KBM-7 (cell line): ENCODE measurements at regions of chr7 and their contacts with region 1.

Region 1: GRCh38 chr7:38215735-38216670 is 38.0 kb downstream of the STARD3NL start:
- DNase-seq: peak; percentile 96

Region 2: GRCh38 chr7:36916619-36917018 is 1299.4 kb before region 1 on chr7:
- in situ Hi-C with region 1: no loop called
- DNase-seq: no peak

Region 3: DNA sequence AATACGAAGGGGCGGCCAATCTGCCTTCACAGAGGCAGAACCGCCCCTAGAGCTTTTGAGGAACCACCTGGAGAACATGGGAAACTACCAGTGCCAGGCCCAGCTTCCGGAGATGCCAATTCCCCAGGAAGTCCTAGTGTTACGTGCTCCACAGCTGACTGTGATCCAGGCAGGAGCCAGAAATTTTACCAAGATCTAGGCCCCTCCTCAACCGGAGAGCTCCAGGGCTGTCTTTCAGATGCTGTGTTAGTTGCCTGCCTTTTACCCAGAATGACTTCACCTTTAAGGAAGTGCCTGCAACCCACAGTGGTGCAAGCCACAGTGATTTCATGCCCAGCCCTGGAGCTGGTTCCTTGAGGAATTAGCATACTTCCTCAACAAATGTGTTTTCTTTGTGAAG is 830.2 kb before region 1 on chr7:
- in situ Hi-C with region 1: no loop called
- DNase-seq: peak; percentile 43

Region 4: GRCh38 chr7:37916673-37917660 is 299.0 kb before region 1 on chr7 and contains the start of gene SFRP4:
- in situ Hi-C with region 1: loop called (anchors 25 kb)
- DNase-seq: peak; percentile 81

Region 5: GRCh38 chr7:38107486-38107893 is 108.5 kb before region 1 on chr7:
- in situ Hi-C with region 1: loop called (anchors 10 kb)
- DNase-seq: peak; percentile 75